Left ventricle myocardium superior (tissue), 1 donor: ENCODE measurements at regions of chr7 and their contacts with region 1.

Region 1: DNA sequence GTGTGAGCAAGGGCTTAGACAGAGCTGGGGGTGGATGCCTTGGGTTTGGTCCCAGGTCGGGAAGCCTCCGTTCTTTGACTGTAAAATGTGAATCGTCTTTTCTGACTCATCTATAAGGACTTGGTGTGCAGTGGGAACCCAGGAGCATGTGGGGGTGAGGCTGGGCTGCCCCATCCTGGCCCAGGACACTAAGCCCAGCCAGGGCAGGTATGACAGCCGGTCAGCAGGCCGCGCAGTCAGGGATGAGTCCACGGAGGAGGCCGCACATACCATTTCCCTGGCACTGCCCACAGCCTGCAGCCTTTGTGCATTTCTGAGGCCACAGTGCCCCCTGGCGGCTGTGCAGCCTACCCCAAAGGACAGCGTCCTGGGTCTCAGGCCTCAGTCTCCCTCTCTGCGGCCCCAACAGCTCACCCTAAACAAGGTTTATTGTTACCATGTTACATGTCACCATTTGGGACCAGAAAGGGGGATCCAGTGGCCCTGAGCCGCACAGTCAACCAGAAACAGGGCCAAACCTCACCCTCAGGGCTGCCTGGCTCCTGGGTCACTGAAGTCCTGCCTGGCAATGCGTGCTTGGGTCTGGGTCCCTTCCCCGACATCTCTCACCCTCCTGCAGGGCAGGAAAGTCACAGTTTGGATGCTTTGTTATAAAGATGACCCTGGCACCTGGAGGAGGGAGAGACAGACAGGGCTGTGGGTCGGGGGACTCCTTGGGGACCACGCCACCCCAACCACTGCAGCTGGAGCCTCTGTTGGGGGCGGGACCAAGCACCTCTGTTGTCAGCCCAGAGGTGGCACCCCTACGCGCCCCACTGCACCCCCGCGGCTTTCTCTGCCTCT is 14.4 kb upstream of the SH2B2 start:
- DNase-seq: peak; percentile 91
- ATAC-seq: peak; percentile 93

Region 2: GRCh38 chr7:101363734-101364374 is 908.4 kb before region 1 on chr7:
- intact Hi-C with region 1: loop called (anchors 5 kb)
- DNase-seq: peak; percentile 80
- ATAC-seq: peak; percentile 98

Region 3: GRCh38 chr7:101542527-101543241 is 729.6 kb before region 1 on chr7:
- intact Hi-C with region 1: loop called (anchors 5 kb)
- DNase-seq: peak; percentile 64
- ATAC-seq: peak; percentile 58

Region 4: DNA sequence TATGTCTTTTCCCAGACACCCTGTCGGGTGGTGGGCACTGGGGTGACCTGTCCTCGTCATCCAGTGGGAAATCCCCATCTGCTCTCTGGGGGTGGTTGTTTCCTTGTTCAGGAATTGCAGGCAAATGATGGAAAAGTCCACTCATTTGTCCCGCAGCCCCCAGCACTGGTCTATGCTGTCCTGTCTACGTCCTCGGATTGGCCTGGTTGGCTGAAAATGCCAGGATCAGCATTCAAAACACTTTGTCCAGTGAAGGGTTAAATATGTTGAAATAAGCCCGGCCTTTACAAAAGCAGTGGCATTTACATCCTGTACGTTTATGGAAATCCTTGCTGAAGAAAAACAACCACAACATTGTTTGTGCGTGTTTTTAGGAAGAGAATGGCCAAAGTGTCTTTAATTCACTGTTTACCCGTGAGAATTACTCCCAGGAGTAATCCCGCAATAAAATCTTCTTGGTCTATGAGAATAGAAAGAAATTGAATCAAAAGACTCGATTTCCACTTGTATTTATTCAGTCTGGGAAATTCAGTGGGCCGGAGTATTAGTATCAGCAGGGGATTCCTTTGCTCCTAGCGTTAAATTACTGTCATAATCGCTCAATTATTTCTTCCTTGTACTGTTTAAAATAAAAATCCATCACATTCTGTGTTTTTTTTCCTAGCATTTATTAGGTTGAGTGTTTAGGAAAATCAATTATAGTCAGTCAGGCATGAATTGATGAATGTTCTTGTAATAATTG is 102.5 kb before region 1 on chr7:
- intact Hi-C with region 1: no loop called
- DNase-seq: no peak
- ATAC-seq: peak; percentile 10